ENCODE measurements at regions of chr13 and their contacts with region 1.

Region 1: DNA sequence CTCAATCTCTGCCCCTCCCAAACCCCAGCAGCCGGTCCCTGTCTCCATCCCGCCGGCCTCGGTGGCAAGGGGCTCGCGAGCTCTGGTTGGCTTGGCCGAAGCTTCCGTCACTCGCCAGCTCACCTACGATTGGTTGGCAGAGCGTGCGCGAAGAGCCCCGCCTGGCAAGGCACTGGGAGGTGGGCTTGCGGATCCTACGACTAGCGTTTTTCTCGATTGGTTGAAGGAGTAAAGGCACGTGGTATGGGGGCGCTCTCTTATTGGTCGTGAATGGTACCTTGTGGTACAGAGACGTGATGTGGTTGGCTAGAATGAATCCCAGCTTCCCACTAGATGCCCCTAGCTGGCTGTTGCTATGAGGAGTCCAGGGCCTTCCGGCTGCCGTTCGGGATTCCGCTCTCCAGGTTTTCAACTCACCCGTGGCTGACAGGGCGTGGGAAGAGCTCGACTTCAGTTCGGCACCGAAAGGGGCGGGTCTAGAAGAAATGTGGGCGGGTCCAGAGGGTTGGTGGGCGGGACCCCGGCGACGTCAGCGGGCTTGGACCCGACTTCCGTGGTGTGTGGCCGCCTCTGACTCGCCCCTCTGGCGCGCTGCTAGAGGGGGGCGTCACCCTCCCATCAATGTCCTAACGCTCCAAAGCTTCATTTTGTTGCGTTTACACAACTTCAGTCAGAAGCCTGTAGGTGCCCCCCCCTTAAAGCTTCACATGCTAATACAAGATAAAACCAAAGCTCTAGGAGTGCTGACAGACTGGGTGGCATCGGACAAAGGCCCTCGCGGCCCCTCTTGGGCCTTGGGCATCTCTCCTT is 847 bp upstream of the RAP2A start:
- DNase-seq: peak; percentile 98
- ATAC-seq: peak; percentile 86
- H3K4me3 Mint-ChIP-seq: peak overlapping the region; percentile 98
- H3K27ac Mint-ChIP-seq: peak overlapping the region; percentile 100
- H3K4me1 Mint-ChIP-seq: peaks cover 24% of the 10 kb centered on the region
- H3K27me3 Mint-ChIP-seq: peaks cover 2% of the 10 kb centered on the region

Region 2: DNA sequence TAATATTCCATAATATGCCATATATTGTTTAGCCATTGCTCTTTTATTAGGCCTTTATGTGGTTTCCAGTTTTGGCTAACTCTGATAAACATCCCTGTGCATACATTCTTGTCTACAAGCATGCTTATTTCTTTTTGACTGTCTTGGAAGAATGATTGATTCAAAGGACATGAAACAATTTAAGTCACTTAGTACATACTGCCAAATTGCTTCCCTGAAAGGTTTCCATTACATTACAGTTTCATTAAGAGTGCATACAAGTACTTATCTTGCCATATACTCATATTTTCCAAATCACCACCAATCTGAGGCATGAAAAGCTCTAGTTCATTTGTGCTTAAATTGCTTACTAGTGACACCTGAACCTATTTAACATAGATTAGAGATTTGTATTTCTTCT is 552.7 kb before region 1 on chr13:
- POLR2A ChIA-PET with region 1: no interaction called
- DNase-seq: no peak
- ATAC-seq: no peak
- H3K4me3 Mint-ChIP-seq: no peak overlapping the region
- H3K27ac Mint-ChIP-seq: no peak overlapping the region
- H3K4me1 Mint-ChIP-seq: no peaks in the 10 kb centered on the region
- H3K27me3 Mint-ChIP-seq: no peaks in the 10 kb centered on the region

Region 3: GRCh38 chr13:97221989-97222700 is 211.0 kb before region 1 on chr13 and contains the start of gene MBNL2:
- POLR2A ChIA-PET with region 1: interaction called, 39 read pairs
- DNase-seq: peak; percentile 75
- ATAC-seq: peak; percentile 99
- H3K4me3 Mint-ChIP-seq: peak within 1 kb of the TSS; percentile 93
- H3K27ac Mint-ChIP-seq: peak within 1 kb of the TSS; percentile 92
- H3K4me1 Mint-ChIP-seq: peaks cover 46% of the 10 kb centered on the region
- H3K27me3 Mint-ChIP-seq: no peaks in the 10 kb centered on the region
- total RNA-seq, gene MBNL2: 17.2 to 17.9 TPM

Region 4: GRCh38 chr13:97367016-97367822 is 65.9 kb before region 1 on chr13:
- POLR2A ChIA-PET with region 1: interaction called, 10 read pairs
- DNase-seq: no peak
- ATAC-seq: no peak
- H3K4me3 Mint-ChIP-seq: no peak overlapping the region
- H3K27ac Mint-ChIP-seq: no peak overlapping the region
- H3K4me1 Mint-ChIP-seq: peaks cover 7% of the 10 kb centered on the region
- H3K27me3 Mint-ChIP-seq: no peaks in the 10 kb centered on the region